GM12878 (cell line): ENCODE measurements at regions of chr10 and their contacts with region 1.

Region 1: GRCh38 chr10:107409522-107409921 is 245.0 kb upstream of the SORCS1 start:
- DNase-seq: no peak
- ATAC-seq: peak; percentile 81
- H3K4me3 ChIP-seq: no peak overlapping the region
- H3K27ac ChIP-seq: no peak overlapping the region
- H3K4me1 ChIP-seq: no peaks in the 10 kb centered on the region
- H3K27me3 ChIP-seq: no peaks in the 10 kb centered on the region
- CTCF ChIP-seq: peak; percentile 32 to 64 (median 47); a peak in 5 of 6 replicates
- EP300 ChIP-seq: no peak
- POLR2A ChIP-seq: no peak
- RAD21 ChIP-seq: peak; percentile 88

Region 2: DNA sequence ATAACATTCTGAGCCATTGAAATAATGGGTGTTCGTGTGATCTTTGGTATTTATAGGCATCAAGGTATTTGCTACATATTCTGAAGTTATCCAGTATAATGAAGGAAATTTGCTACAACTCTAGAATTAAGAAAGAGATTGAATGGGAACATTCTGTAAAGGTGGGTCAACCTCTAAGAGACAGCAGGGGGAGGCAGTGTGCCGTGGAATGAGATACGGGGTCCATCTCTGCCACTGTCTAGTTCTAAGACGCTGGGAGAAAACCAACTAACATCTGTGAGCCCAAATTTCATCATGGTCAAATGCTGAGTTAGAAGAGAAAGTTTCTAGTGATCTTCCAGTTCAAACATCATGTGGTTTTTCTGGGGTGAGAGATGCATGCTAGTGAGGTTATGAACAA is 613.9 kb before region 1 on chr10:
- CTCF ChIA-PET with region 1: no interaction called
- POLR2A ChIA-PET with region 1: no interaction called
- RAD21 ChIA-PET with region 1: no interaction called
- SMC1A ChIA-PET with region 1: interaction called, 3 read pairs
- in situ Hi-C with region 1: no loop called
- intact Hi-C with region 1: loop called (anchors 2 kb)
- DNase-seq: peak; percentile 48
- ATAC-seq: peak; percentile 98
- H3K4me3 ChIP-seq: no peak overlapping the region
- H3K27ac ChIP-seq: no peak overlapping the region
- H3K4me1 ChIP-seq: no peaks in the 10 kb centered on the region
- H3K27me3 ChIP-seq: no peaks in the 10 kb centered on the region
- CTCF ChIP-seq: peak; percentile 57 to 78 (median 71)
- EP300 ChIP-seq: no peak
- POLR2A ChIP-seq: no peak
- RAD21 ChIP-seq: peak; percentile 88

Region 3: DNA sequence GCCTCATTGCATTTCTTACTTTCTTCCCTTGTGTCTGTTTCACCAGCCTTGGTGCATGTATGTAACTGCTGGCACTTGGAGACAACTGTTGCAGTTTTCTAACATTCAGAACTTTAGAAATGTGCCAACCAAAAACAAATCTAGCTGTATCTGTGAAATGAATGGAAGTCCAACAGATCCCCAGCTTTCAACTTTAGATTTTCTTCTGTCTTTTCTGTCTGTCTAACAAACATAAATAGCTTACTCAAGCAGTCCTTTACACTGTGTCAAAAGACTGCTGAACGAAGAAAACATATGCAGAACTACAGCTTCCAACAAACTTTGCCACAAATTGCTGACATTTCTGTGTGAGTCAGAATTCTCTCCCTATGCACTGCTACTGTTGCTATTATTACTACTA is 275.9 kb before region 1 on chr10:
- CTCF ChIA-PET with region 1: no interaction called
- POLR2A ChIA-PET with region 1: no interaction called
- RAD21 ChIA-PET with region 1: no interaction called
- SMC1A ChIA-PET with region 1: no interaction called
- in situ Hi-C with region 1: no loop called
- intact Hi-C with region 1: no loop called
- DNase-seq: no peak
- ATAC-seq: no peak
- H3K4me3 ChIP-seq: no peak overlapping the region
- H3K27ac ChIP-seq: no peak overlapping the region
- H3K4me1 ChIP-seq: no peaks in the 10 kb centered on the region
- H3K27me3 ChIP-seq: no peaks in the 10 kb centered on the region
- CTCF ChIP-seq: no peak
- EP300 ChIP-seq: no peak
- POLR2A ChIP-seq: no peak
- RAD21 ChIP-seq: no peak

Region 4: GRCh38 chr10:107379601-107380000 is 29.9 kb before region 1 on chr10:
- CTCF ChIA-PET with region 1: no interaction called
- POLR2A ChIA-PET with region 1: no interaction called
- RAD21 ChIA-PET with region 1: no interaction called
- SMC1A ChIA-PET with region 1: no interaction called
- in situ Hi-C with region 1: no loop called
- intact Hi-C with region 1: no loop called
- DNase-seq: no peak
- ATAC-seq: no peak
- H3K4me3 ChIP-seq: no peak overlapping the region
- H3K27ac ChIP-seq: no peak overlapping the region
- H3K4me1 ChIP-seq: no peaks in the 10 kb centered on the region
- H3K27me3 ChIP-seq: no peaks in the 10 kb centered on the region
- CTCF ChIP-seq: no peak
- EP300 ChIP-seq: no peak
- POLR2A ChIP-seq: no peak
- RAD21 ChIP-seq: no peak

Region 5: DNA sequence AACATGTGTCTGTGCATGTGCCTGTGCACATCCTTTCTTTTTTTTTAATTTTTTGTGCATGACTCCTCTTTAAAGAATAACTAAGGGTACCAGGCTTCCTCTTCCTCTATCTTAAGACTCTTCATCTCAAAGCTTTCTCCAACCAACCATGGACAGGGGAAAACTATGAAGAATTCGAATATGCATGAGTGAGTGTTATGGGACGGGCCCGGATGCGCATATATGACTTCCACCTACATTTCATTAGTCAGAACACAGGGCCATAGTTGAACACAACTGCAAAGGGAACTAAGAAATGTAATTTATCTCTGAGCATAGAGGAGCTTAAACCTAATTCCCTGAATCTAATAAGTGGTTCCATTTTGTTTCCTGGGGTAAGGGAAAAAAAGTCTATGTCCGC is 25.3 kb after region 1 on chr10:
- CTCF ChIA-PET with region 1: interaction called, 14 read pairs
- POLR2A ChIA-PET with region 1: no interaction called
- RAD21 ChIA-PET with region 1: interaction called, 8 read pairs
- SMC1A ChIA-PET with region 1: interaction called, 11 read pairs
- in situ Hi-C with region 1: no loop called
- intact Hi-C with region 1: no loop called
- DNase-seq: no peak
- ATAC-seq: no peak; the same call in 1 of the 3 replicates
- H3K4me3 ChIP-seq: no peak overlapping the region
- H3K27ac ChIP-seq: no peak overlapping the region
- H3K4me1 ChIP-seq: 0 out of 2 replicates have a peak, but pooled peaks cover 2% of the 10 kb centered on the region
- H3K27me3 ChIP-seq: no peaks in the 10 kb centered on the region
- CTCF ChIP-seq: no peak
- EP300 ChIP-seq: no peak
- POLR2A ChIP-seq: no peak
- RAD21 ChIP-seq: no peak

Region 6: DNA sequence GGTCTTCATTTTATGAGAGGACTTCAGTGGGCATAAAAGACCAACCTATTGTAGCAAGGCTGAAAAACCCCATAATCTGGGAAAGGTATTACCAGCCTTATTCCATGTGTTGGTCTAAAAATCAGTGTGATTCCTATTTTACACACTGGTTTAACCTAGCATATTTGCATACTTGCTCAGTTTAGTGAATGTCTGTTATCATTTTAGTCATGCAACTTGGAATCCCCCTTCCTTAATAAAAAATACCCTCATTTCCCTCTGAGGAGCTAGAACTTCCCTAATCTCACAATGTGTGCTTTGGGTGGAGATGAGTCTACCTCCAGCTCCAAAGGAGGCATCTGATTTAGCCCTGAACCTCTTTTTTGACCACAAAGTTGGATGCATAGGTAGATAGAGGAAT is 67.7 kb after region 1 on chr10:
- CTCF ChIA-PET with region 1: interaction called, 14 read pairs
- POLR2A ChIA-PET with region 1: no interaction called
- RAD21 ChIA-PET with region 1: interaction called, 7 read pairs
- SMC1A ChIA-PET with region 1: interaction called, 17 read pairs
- in situ Hi-C with region 1: no loop called
- intact Hi-C with region 1: no loop called
- DNase-seq: peak; percentile 45
- ATAC-seq: peak; percentile 82
- H3K4me3 ChIP-seq: peak overlapping the region; percentile 39; the same call in 1 of the 2 replicates
- H3K27ac ChIP-seq: peak overlapping the region; percentile 1; the same call in 1 of the 2 replicates
- H3K4me1 ChIP-seq: peaks cover 7% of the 10 kb centered on the region
- H3K27me3 ChIP-seq: no peaks in the 10 kb centered on the region
- CTCF ChIP-seq: no peak
- EP300 ChIP-seq: peak in 1 of 2 experiments; percentile 51; a peak in 1 of 4 replicates
- POLR2A ChIP-seq: no peak
- RAD21 ChIP-seq: no peak

Region 7: GRCh38 chr10:107553470-107553869 is 143.9 kb after region 1 on chr10:
- CTCF ChIA-PET with region 1: interaction called, 9 read pairs
- POLR2A ChIA-PET with region 1: no interaction called
- RAD21 ChIA-PET with region 1: interaction called, 10 read pairs
- SMC1A ChIA-PET with region 1: interaction called, 18 read pairs
- in situ Hi-C with region 1: no loop called
- intact Hi-C with region 1: no loop called
- DNase-seq: peak; percentile 37
- ATAC-seq: peak; percentile 86
- H3K4me3 ChIP-seq: no peak overlapping the region
- H3K27ac ChIP-seq: no peak overlapping the region
- H3K4me1 ChIP-seq: no peaks in the 10 kb centered on the region
- H3K27me3 ChIP-seq: no peaks in the 10 kb centered on the region
- CTCF ChIP-seq: no peak
- EP300 ChIP-seq: peak in 1 of 2 experiments; percentile 71; a peak in 2 of 4 replicates
- POLR2A ChIP-seq: no peak
- RAD21 ChIP-seq: no peak

Region 8: DNA sequence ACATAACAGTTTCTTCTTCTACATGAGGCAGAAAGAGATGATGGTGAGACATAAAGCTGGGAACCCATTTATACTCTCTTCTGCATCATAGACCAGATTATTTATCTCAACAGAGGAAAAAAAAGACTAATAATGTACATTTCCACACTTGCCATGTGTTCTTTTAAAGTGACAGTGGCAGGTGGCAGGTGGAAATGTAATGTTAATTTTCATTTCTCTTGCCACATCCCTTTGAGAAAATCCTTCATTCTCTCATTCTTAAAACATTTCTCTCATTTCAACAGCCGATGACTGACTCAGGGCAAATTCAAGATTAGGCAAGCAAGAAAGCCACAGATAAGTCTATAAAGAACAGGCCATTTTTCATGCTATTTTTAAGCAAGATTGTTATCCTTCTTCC is 390.5 kb after region 1 on chr10:
- CTCF ChIA-PET with region 1: interaction called, 7 read pairs
- POLR2A ChIA-PET with region 1: no interaction called
- RAD21 ChIA-PET with region 1: interaction called, 7 read pairs
- SMC1A ChIA-PET with region 1: interaction called, 16 read pairs
- in situ Hi-C with region 1: no loop called
- intact Hi-C with region 1: no loop called
- DNase-seq: no peak
- ATAC-seq: no peak
- H3K4me3 ChIP-seq: no peak overlapping the region
- H3K27ac ChIP-seq: no peak overlapping the region
- H3K4me1 ChIP-seq: no peaks in the 10 kb centered on the region
- H3K27me3 ChIP-seq: no peaks in the 10 kb centered on the region
- CTCF ChIP-seq: no peak
- EP300 ChIP-seq: no peak
- POLR2A ChIP-seq: no peak
- RAD21 ChIP-seq: no peak

Region 9: GRCh38 chr10:107914450-107915214 is 505.1 kb after region 1 on chr10:
- CTCF ChIA-PET with region 1: interaction called, 11 read pairs
- POLR2A ChIA-PET with region 1: no interaction called
- RAD21 ChIA-PET with region 1: interaction called, 3 read pairs
- SMC1A ChIA-PET with region 1: interaction called, 8 read pairs
- in situ Hi-C with region 1: no loop called
- intact Hi-C with region 1: no loop called
- DNase-seq: no peak
- ATAC-seq: peak; percentile 73
- H3K4me3 ChIP-seq: no peak overlapping the region
- H3K27ac ChIP-seq: no peak overlapping the region
- H3K4me1 ChIP-seq: no peaks in the 10 kb centered on the region
- H3K27me3 ChIP-seq: no peaks in the 10 kb centered on the region
- CTCF ChIP-seq: no peak; a peak in 1 of 6 replicates
- EP300 ChIP-seq: no peak
- POLR2A ChIP-seq: no peak
- RAD21 ChIP-seq: no peak